ENCODE measurements at regions of chr12 and their contacts with region 1.

Region 1: GRCh38 chr12:6285063-6285477 is 25.4 kb upstream of the PLEKHG6 start:
- DNase-seq: peak in 1 of 2 experiments; percentile 85
- H3K4me3 ChIP-seq: no peak overlapping the region
- H3K27ac ChIP-seq: no peak overlapping the region
- H3K4me1 ChIP-seq: peaks cover 0 to 5% (median 3%) of the 10 kb centered on the region in 4 experiments; a peak in 3 of 7 replicates
- H3K27me3 ChIP-seq: peaks cover 0 to 2% (median 0%) of the 10 kb centered on the region in 4 experiments; a peak in 2 of 7 replicates
- CTCF ChIP-seq: peak; percentile 83 to 92 (median 91)
- EP300 ChIP-seq: no peak
- POLR2A ChIP-seq: no peak
- RAD21 ChIP-seq: peak; percentile 98 to 99

Region 2: GRCh38 chr12:6056406-6057240 is 228.4 kb before region 1 on chr12:
- CTCF ChIA-PET with region 1: interaction called, 130 read pairs
- POLR2A ChIA-PET with region 1: interaction called, 3 read pairs
- DNase-seq: peak; percentile 33 to 63
- H3K4me3 ChIP-seq: peak overlapping the region; percentile 38 to 62 (median 40)
- H3K27ac ChIP-seq: no peak overlapping the region
- H3K4me1 ChIP-seq: peaks cover 7 to 18% (median 16%) of the 10 kb centered on the region in 4 experiments
- H3K27me3 ChIP-seq: peaks cover 0 to 16% (median 10%) of the 10 kb centered on the region in 4 experiments; a peak in 5 of 7 replicates
- CTCF ChIP-seq: peak; percentile 58 to 66 (median 60)
- EP300 ChIP-seq: no peak
- POLR2A ChIP-seq: no peak
- RAD21 ChIP-seq: peak; percentile 25 to 56; a peak in 3 of 4 replicates

Region 3: DNA sequence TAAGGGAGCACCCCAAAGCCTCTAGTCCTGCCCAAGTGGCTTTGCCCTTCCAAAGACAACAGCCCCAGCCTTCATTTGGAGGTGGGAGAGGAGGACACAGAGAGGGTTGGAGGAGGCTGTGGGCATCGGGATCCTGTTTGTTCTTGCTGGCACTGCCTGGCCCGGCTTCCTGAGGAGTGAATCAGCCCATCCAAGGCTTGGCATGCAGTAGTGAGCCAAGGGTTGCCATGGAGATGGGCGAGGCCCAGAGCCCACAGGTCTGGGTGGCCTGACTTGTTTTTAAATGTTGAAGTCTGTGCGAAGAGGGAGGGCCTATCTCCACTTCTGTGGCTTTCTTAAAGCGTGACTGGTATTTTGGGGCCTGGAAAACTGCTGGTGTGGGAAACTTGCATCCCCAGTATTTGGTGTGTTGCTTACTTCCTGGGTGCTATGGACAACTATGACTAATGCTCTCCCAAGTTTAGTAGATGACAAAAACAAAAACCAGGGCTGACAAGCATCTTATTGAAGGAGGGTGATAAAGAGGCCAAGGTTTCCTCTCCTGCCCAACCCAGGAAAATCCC is 69.1 kb before region 1 on chr12:
- CTCF ChIA-PET with region 1: interaction called, 433 read pairs
- POLR2A ChIA-PET with region 1: interaction called, 14 read pairs
- DNase-seq: no peak
- H3K4me3 ChIP-seq: peak overlapping the region in 1 of 4 experiments; percentile 23; a peak in 1 of 8 replicates
- H3K27ac ChIP-seq: peak overlapping the region; percentile 79
- H3K4me1 ChIP-seq: peaks cover 28 to 50% (median 43%) of the 10 kb centered on the region in 4 experiments
- H3K27me3 ChIP-seq: no peaks in the 10 kb centered on the region; a peak in 1 of 7 replicates
- CTCF ChIP-seq: no peak
- EP300 ChIP-seq: no peak
- POLR2A ChIP-seq: no peak
- RAD21 ChIP-seq: no peak

Region 4: GRCh38 chr12:6272300-6273204 is 12.5 kb before region 1 on chr12:
- CTCF ChIA-PET with region 1: interaction called, 53 read pairs
- POLR2A ChIA-PET with region 1: interaction called, 4 read pairs
- DNase-seq: no peak
- H3K4me3 ChIP-seq: no peak overlapping the region
- H3K27ac ChIP-seq: peak overlapping the region; percentile 31; the same call in 1 of the 2 replicates
- H3K4me1 ChIP-seq: peaks cover 24 to 35% (median 31%) of the 10 kb centered on the region in 4 experiments
- H3K27me3 ChIP-seq: no peaks in the 10 kb centered on the region
- CTCF ChIP-seq: no peak
- EP300 ChIP-seq: no peak
- POLR2A ChIP-seq: no peak
- RAD21 ChIP-seq: no peak

Measured in H1 (cell line).